CD8-positive, alpha-beta T cell (primary cell): ENCODE measurements at regions of chr3 and their contacts with region 1.

Region 1: GRCh38 chr3:4493014-4493940 is at the start of gene ITPR1:
- DNase-seq: peak; percentile 96 to 99 (median 98)
- ATAC-seq: peak; percentile 84
- H3K4me3 ChIP-seq: peak within 1 kb of the TSS; percentile 94 to 97
- H3K4me3 Mint-ChIP-seq: peak within 1 kb of the TSS; percentile 93
- H3K27ac ChIP-seq: peak within 1 kb of the TSS; percentile 70 to 75
- H3K27ac Mint-ChIP-seq: peak within 1 kb of the TSS; percentile 87
- H3K4me1 ChIP-seq: peaks cover 24% of the 10 kb centered on the region
- H3K4me1 Mint-ChIP-seq: peaks cover 48% of the 10 kb centered on the region
- H3K27me3 ChIP-seq: no peaks in the 10 kb centered on the region
- H3K27me3 Mint-ChIP-seq: no peaks in the 10 kb centered on the region
- CTCF ChIP-seq: no peak
- total RNA-seq, gene ITPR1: 57.5 to 62.3 TPM

Region 2: GRCh38 chr3:3126477-3127431 is 1366.5 kb before region 1 on chr3 and contains the start of gene TRNT1:
- CTCF ChIA-PET with region 1: no interaction called
- POLR2A ChIA-PET with region 1: interaction called, 4 read pairs
- intact Hi-C with region 1: loop called in 1 of 2 experiments (anchors 1 kb)
- DNase-seq: peak; percentile 92 to 98 (median 96)
- ATAC-seq: peak; percentile 95
- H3K4me3 ChIP-seq: peak within 1 kb of the TSS; percentile 77 to 93
- H3K4me3 Mint-ChIP-seq: peak within 1 kb of the TSS; percentile 94
- H3K27ac ChIP-seq: peak within 1 kb of the TSS; percentile 97 to 98
- H3K27ac Mint-ChIP-seq: peak within 1 kb of the TSS; percentile 98
- H3K4me1 ChIP-seq: peaks cover 38% of the 10 kb centered on the region
- H3K4me1 Mint-ChIP-seq: peaks cover 41% of the 10 kb centered on the region
- H3K27me3 ChIP-seq: no peaks in the 10 kb centered on the region
- H3K27me3 Mint-ChIP-seq: no peaks in the 10 kb centered on the region
- CTCF ChIP-seq: no peak
- total RNA-seq, gene TRNT1: 26.0 to 26.5 TPM

Region 3: GRCh38 chr3:3739330-3740060 is 753.8 kb before region 1 on chr3:
- CTCF ChIA-PET with region 1: no interaction called
- POLR2A ChIA-PET with region 1: no interaction called
- intact Hi-C with region 1: no loop called
- DNase-seq: no peak
- ATAC-seq: no peak
- H3K4me3 ChIP-seq: no peak overlapping the region
- H3K4me3 Mint-ChIP-seq: no peak overlapping the region
- H3K27ac ChIP-seq: no peak overlapping the region
- H3K27ac Mint-ChIP-seq: no peak overlapping the region
- H3K4me1 ChIP-seq: no peaks in the 10 kb centered on the region
- H3K4me1 Mint-ChIP-seq: no peaks in the 10 kb centered on the region
- H3K27me3 ChIP-seq: no peaks in the 10 kb centered on the region
- H3K27me3 Mint-ChIP-seq: no peaks in the 10 kb centered on the region
- CTCF ChIP-seq: no peak

Region 4: DNA sequence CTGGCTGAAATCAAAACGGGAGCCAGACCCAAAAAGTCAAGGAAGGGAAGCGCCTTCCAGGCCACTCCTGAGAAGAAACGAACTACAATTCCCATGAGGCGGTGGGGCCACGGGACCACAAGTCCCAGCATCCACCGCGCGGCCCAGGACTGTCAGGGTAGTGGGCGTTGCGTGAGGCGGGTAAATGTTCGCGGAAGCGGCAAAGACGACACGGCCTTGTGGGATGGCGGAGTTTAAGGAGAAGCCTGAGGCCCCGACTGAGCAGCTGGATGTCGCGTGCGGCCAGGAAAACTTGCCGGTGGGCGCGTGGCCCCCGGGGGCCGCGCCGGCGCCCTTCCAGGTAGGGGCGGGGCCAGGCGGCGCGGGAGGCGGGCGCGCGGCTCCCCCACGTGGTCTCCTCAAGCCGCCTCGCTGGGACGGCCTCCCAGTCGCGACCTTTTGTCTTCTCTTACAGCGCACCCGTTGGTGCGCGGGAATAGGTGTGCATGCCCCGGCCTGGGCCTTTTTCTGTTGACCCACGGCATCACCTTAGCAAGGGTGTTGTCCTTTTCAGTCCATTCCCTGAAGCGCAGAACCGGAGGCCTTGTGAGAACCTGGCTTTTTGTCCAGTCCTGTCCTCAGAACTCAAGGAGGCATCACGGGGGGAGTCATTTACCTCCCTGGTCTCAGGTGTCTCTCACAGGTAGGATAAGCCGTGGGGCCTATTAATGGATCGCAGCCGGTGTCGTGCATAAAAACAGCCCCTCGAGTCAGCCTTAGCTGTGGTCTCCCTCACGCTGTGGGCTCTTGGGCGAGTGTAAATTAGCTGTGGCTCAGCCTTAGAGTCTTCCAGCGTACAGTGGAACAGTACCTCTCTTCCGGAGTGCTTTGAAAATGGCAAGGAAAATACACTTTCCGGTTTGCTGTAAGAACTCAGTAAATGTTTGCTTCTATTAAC is 189.8 kb before region 1 on chr3 and contains the start of gene SETMAR:
- CTCF ChIA-PET with region 1: interaction called, 4 read pairs
- POLR2A ChIA-PET with region 1: no interaction called
- intact Hi-C with region 1: loop called (anchors 1 kb)
- DNase-seq: peak; percentile 67 to 89 (median 80)
- ATAC-seq: peak; percentile 92
- H3K4me3 ChIP-seq: peak within 1 kb of the TSS; percentile 71 to 83
- H3K4me3 Mint-ChIP-seq: peak within 1 kb of the TSS; percentile 92
- H3K27ac ChIP-seq: peak within 1 kb of the TSS; percentile 70 to 88
- H3K27ac Mint-ChIP-seq: peak within 1 kb of the TSS; percentile 96
- H3K4me1 ChIP-seq: peaks cover 5% of the 10 kb centered on the region
- H3K4me1 Mint-ChIP-seq: peaks cover 24% of the 10 kb centered on the region
- H3K27me3 ChIP-seq: no peaks in the 10 kb centered on the region
- H3K27me3 Mint-ChIP-seq: no peaks in the 10 kb centered on the region
- CTCF ChIP-seq: no peak
- total RNA-seq, gene SETMAR: 8.4 to 9.8 TPM

Region 5: GRCh38 chr3:4426601-4427344 is 66.5 kb before region 1 on chr3:
- CTCF ChIA-PET with region 1: no interaction called
- POLR2A ChIA-PET with region 1: no interaction called
- intact Hi-C with region 1: no loop called
- DNase-seq: no peak
- ATAC-seq: no peak
- H3K4me3 ChIP-seq: no peak overlapping the region
- H3K4me3 Mint-ChIP-seq: no peak overlapping the region
- H3K27ac ChIP-seq: no peak overlapping the region
- H3K27ac Mint-ChIP-seq: no peak overlapping the region
- H3K4me1 ChIP-seq: no peaks in the 10 kb centered on the region
- H3K4me1 Mint-ChIP-seq: peaks cover 5% of the 10 kb centered on the region
- H3K27me3 ChIP-seq: no peaks in the 10 kb centered on the region
- H3K27me3 Mint-ChIP-seq: no peaks in the 10 kb centered on the region
- CTCF ChIP-seq: no peak

Region 6: GRCh38 chr3:4504340-4505261 is 11.3 kb after region 1 on chr3:
- CTCF ChIA-PET with region 1: interaction called, 5 read pairs
- POLR2A ChIA-PET with region 1: interaction called, 25 read pairs
- intact Hi-C with region 1: loop called in 1 of 2 experiments (anchors 1 kb)
- DNase-seq: peak in 6 of 9 experiments; percentile 36 to 85 (median 56)
- ATAC-seq: peak; percentile 78
- H3K4me3 ChIP-seq: peak overlapping the region; percentile 47 to 48
- H3K4me3 Mint-ChIP-seq: peak overlapping the region; percentile 88
- H3K27ac ChIP-seq: peak overlapping the region; percentile 36 to 83
- H3K27ac Mint-ChIP-seq: peak overlapping the region; percentile 94
- H3K4me1 ChIP-seq: peaks cover 20% of the 10 kb centered on the region
- H3K4me1 Mint-ChIP-seq: peaks cover 60% of the 10 kb centered on the region
- H3K27me3 ChIP-seq: no peaks in the 10 kb centered on the region
- H3K27me3 Mint-ChIP-seq: no peaks in the 10 kb centered on the region
- CTCF ChIP-seq: no peak

Region 7: GRCh38 chr3:4584456-4585249 is 91.4 kb after region 1 on chr3:
- CTCF ChIA-PET with region 1: no interaction called
- POLR2A ChIA-PET with region 1: interaction called, 7 read pairs
- intact Hi-C with region 1: loop called in 1 of 2 experiments (anchors 5 kb)
- DNase-seq: peak in 2 of 9 experiments; percentile 40 to 60
- ATAC-seq: peak; percentile 64
- H3K4me3 ChIP-seq: peak overlapping the region; percentile 21 to 38
- H3K4me3 Mint-ChIP-seq: peak overlapping the region; percentile 84
- H3K27ac ChIP-seq: peak overlapping the region; percentile 18 to 22
- H3K27ac Mint-ChIP-seq: peak overlapping the region; percentile 88
- H3K4me1 ChIP-seq: peaks cover 26% of the 10 kb centered on the region
- H3K4me1 Mint-ChIP-seq: peaks cover 82% of the 10 kb centered on the region
- H3K27me3 ChIP-seq: no peaks in the 10 kb centered on the region
- H3K27me3 Mint-ChIP-seq: no peaks in the 10 kb centered on the region
- CTCF ChIP-seq: no peak

Region 8: GRCh38 chr3:5057857-5058324 is 564.6 kb after region 1 on chr3:
- CTCF ChIA-PET with region 1: no interaction called
- POLR2A ChIA-PET with region 1: no interaction called
- intact Hi-C with region 1: loop called in 1 of 2 experiments (anchors 10 kb)
- DNase-seq: peak; percentile 34 to 87 (median 69)
- ATAC-seq: peak; percentile 96
- H3K4me3 ChIP-seq: no peak overlapping the region
- H3K4me3 Mint-ChIP-seq: no peak overlapping the region
- H3K27ac ChIP-seq: no peak overlapping the region
- H3K27ac Mint-ChIP-seq: no peak overlapping the region
- H3K4me1 ChIP-seq: no peaks in the 10 kb centered on the region
- H3K4me1 Mint-ChIP-seq: no peaks in the 10 kb centered on the region
- H3K27me3 ChIP-seq: peaks cover 0 to 4% of the 10 kb centered on the region in 2 experiments
- H3K27me3 Mint-ChIP-seq: peaks cover 2% of the 10 kb centered on the region
- CTCF ChIP-seq: peak; percentile 63